ENCODE measurements at regions of chr9 and their contacts with region 1.

Region 1: DNA sequence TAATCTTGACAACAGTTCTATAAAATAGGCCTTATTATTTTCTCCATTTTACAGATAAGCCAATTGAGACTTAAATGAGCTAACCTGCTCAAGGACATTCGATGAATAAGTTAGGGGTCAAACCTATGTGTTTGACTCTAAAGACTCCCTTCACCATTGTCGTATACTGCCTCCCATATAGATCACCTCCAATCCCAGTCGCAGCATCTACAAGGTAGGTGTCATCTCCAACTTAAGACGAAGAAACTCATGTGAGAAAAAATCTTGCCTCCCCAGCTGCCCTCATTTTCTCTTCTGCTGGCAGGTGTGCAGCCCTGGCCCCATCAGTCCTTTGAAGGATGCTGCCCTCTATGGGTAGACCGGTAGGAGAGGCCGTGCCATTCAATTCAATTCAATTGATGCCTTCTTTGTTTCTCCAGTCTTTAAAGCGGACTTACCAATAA is 75.2 kb upstream of the SMARCA2 start:
- DNase-seq: peak; percentile 80
- CTCF ChIP-seq: peak; percentile 87

Region 2: DNA sequence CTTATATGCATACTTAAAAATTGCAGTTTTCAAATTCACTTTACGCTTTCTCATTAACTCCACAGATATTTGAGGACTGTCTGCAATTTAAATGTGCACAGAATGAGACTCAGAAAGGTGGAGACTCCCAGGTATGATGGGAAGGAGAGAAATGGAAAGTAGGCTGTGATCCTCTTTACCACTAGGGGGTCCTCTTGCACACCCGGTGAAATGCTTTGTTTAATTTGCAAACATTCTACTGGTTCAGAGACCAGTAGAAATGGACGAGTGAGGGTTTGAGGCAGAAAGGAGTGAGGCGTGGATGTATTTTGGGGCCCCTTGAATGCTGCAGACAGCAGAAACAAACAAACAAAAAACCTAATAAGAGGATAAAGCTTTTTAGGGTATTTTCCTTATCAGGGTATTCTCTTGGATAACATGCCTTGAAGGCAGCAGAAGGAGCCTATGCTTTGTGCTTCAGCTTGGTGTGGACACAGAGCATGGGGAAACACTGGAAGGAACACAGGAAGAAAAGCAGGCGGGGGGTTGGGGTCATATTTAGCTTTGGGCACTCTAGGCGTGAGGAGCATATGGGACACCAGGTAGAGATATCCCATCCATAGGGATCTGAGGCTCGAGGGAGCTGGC is 479.7 kb before region 1 on chr9:
- CTCF ChIA-PET with region 1: interaction called, 10 read pairs
- POLR2A ChIA-PET with region 1: no interaction called
- DNase-seq: peak; percentile 43
- CTCF ChIP-seq: peak; percentile 63

Region 3: DNA sequence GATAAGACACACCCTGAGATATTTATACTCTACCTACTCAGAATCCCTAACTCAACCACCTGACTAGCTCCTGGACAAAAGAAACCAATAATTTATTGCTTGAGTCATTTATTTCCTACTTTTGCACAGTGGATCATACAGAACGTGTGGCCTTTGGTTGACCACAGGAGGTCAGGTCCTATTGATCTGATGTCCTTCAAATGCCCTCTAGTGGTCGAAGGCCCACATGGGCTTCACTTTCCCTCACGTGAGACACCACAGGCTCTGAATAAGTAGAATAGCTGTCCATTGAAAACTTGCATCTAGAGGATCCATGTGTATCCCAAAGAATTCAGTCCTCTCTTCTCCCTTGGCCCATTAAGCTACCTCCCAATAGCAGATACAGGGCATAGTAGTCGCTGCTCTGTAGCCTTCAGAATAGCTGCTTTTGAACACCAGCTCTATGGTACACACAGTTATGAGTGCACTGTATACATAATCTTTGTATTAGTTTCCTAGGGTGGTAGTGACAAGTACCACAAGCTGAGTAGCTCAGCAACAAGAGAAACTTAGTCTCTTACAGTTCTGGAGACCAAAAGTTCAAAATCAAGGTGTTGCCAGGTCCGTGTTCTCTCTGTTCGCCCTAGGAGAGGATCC is 102.4 kb before region 1 on chr9:
- CTCF ChIA-PET with region 1: interaction called, 22 read pairs
- POLR2A ChIA-PET with region 1: no interaction called
- DNase-seq: peak; percentile 51
- CTCF ChIP-seq: peak; percentile 48

Region 4: DNA sequence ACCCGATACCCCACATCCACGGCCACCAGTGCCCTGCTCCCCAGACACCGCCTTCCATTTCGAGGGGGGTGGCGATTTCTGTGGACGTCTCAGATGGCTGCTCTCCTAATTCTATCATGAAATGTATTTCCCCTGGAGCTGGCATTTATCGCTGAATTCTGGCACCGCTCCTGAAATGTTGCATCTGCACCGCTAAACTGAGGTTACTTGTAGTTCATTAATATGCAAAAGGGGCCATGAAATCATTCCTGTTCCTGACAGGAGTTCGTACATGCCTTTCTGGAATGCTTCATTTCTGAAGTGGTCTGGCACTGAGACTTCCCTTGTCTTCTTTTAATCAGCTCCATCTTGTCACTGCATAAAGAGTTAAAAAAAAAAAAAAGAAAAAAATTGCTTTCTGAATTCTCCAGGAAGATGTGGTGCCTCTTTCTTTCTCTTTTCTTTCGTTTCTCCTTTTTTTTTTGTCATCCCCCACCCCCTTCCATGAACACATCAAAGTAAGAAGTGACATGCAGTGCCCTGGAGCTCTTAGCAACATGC is 22.5 kb before region 1 on chr9:
- CTCF ChIA-PET with region 1: interaction called, 19 read pairs
- POLR2A ChIA-PET with region 1: interaction called, 3 read pairs
- DNase-seq: no peak
- CTCF ChIP-seq: no peak

Region 5: DNA sequence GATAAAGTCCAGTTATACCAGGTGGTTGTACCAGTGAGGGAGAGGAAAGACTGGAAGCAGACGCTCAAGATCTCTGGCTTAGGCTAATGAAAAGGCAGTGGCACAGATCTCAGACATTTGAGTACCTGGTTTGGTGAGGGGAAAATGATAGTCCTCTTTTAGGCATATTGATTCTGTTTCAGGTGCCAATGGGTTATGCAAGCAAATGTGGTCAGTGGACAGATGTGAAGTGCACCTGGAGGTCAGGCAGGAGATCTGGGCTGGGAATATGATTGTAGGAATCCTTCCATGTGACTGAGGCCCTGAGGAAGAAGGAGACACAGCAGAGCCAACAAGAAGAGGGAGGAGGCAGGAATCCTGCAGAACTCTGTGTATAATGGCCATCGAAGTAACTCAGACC is 11.5 kb after region 1 on chr9:
- CTCF ChIA-PET with region 1: interaction called, 10 read pairs
- POLR2A ChIA-PET with region 1: no interaction called
- DNase-seq: no peak
- CTCF ChIP-seq: no peak

Region 6: DNA sequence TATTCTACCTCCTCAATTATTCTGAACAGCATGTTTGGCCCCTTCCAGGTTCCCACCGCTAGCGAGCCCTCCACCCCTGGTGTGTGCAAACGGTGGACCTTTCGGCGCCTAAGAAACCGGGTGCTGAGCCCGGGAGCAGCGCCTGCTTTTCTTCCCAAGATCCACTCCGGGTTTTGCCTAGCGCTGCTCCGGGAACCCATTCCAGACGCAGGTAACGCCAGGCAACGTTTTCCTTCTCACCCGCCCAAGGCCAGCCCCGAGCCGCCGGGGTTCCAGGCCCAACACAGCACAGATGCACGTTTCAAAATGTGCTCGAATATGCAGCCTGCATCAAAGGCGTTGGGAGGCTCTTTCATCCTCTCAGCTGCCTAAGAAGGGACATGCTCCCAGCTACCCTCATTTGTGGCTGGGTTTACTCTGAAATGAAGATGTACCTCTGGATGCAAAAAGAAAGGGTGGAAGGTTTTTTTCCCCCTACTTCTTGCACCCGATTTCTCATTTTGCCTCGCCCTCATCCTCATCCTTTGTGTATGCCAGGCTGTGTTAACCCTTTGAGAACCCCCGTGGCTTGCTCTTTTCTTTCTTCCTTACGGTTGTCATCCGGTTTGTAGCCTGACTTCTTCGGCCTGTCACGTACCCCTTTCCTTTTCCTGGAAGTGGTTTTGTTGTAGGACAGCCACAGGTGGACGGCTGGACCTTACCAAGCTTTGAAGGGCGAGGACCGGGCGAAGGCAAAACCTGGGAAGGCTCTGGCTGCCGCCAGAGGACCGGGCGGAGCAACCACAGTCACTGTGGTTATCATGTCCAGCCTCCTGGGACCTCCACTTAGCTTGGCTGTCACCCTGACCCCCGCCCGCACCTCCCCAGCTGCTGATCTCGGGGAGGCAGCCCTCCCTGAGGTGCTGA is 302.1 kb after region 1 on chr9:
- CTCF ChIA-PET with region 1: no interaction called
- POLR2A ChIA-PET with region 1: no interaction called
- DNase-seq: peak; percentile 75
- CTCF ChIP-seq: no peak

Measured in GM10248 (cell line).